ENCODE measurements at regions of chr4 and their contacts with region 1.

Region 1: GRCh38 chr4:109702950-109703663 is at the start of gene CASP6:
- DNase-seq: peak; percentile 63 to 74
- ATAC-seq: peak; percentile 90 to 91
- H3K4me3 ChIP-seq: peak within 1 kb of the TSS; percentile 79 to 92 (median 82)
- H3K27ac ChIP-seq: peak within 1 kb of the TSS; percentile 76 to 82 (median 78)
- H3K4me1 ChIP-seq: peaks cover 8 to 13% of the 10 kb centered on the region in 2 donors
- H3K27me3 ChIP-seq: no peaks in the 10 kb centered on the region
- CTCF ChIP-seq: peak; percentile 50 to 81 (median 78)
- POLR2A ChIP-seq: peak; percentile 10 to 27
- total RNA-seq, gene CASP6: 6.6 to 25.2 (median 9.0) TPM

Region 2: GRCh38 chr4:109424093-109424841 is 278.8 kb before region 1 on chr4:
- in situ Hi-C with region 1: loop called in 3 of 4 experiments (anchors 10 to 25 kb)
- intact Hi-C with region 1: loop called (anchors 2 kb)
- DNase-seq: no peak
- ATAC-seq: no peak
- H3K4me3 ChIP-seq: no peak overlapping the region
- H3K27ac ChIP-seq: no peak overlapping the region
- H3K4me1 ChIP-seq: no peaks in the 10 kb centered on the region
- H3K27me3 ChIP-seq: no peaks in the 10 kb centered on the region
- CTCF ChIP-seq: no peak
- POLR2A ChIP-seq: no peak

Region 3: GRCh38 chr4:109803924-109804571 is 100.9 kb after region 1 on chr4:
- in situ Hi-C with region 1: loop called in 1 of 4 experiments (anchors 25 kb)
- intact Hi-C with region 1: loop called (anchors 2 kb)
- DNase-seq: no peak
- ATAC-seq: peak; percentile 41 to 60
- H3K4me3 ChIP-seq: no peak overlapping the region
- H3K27ac ChIP-seq: no peak overlapping the region
- H3K4me1 ChIP-seq: no peaks in the 10 kb centered on the region
- H3K27me3 ChIP-seq: no peaks in the 10 kb centered on the region
- CTCF ChIP-seq: peak in 2 of 5 experiments; percentile 23 to 38
- POLR2A ChIP-seq: no peak

Region 4: GRCh38 chr4:109967797-109968507 is 264.8 kb after region 1 on chr4:
- in situ Hi-C with region 1: loop called in 1 of 4 experiments (anchors 25 kb)
- intact Hi-C with region 1: no loop called
- DNase-seq: no peak
- ATAC-seq: no peak
- H3K4me3 ChIP-seq: no peak overlapping the region
- H3K27ac ChIP-seq: no peak overlapping the region
- H3K4me1 ChIP-seq: no peaks in the 10 kb centered on the region
- H3K27me3 ChIP-seq: no peaks in the 10 kb centered on the region
- CTCF ChIP-seq: no peak
- POLR2A ChIP-seq: no peak

Region 5: GRCh38 chr4:110193822-110194761 is 491.0 kb after region 1 on chr4:
- in situ Hi-C with region 1: no loop called
- intact Hi-C with region 1: loop called (anchors 10 kb)
- DNase-seq: peak; percentile 4 to 31
- ATAC-seq: no peak
- H3K4me3 ChIP-seq: no peak overlapping the region
- H3K27ac ChIP-seq: no peak overlapping the region
- H3K4me1 ChIP-seq: no peaks in the 10 kb centered on the region
- H3K27me3 ChIP-seq: no peaks in the 10 kb centered on the region
- CTCF ChIP-seq: no peak
- POLR2A ChIP-seq: no peak

Region 6: DNA sequence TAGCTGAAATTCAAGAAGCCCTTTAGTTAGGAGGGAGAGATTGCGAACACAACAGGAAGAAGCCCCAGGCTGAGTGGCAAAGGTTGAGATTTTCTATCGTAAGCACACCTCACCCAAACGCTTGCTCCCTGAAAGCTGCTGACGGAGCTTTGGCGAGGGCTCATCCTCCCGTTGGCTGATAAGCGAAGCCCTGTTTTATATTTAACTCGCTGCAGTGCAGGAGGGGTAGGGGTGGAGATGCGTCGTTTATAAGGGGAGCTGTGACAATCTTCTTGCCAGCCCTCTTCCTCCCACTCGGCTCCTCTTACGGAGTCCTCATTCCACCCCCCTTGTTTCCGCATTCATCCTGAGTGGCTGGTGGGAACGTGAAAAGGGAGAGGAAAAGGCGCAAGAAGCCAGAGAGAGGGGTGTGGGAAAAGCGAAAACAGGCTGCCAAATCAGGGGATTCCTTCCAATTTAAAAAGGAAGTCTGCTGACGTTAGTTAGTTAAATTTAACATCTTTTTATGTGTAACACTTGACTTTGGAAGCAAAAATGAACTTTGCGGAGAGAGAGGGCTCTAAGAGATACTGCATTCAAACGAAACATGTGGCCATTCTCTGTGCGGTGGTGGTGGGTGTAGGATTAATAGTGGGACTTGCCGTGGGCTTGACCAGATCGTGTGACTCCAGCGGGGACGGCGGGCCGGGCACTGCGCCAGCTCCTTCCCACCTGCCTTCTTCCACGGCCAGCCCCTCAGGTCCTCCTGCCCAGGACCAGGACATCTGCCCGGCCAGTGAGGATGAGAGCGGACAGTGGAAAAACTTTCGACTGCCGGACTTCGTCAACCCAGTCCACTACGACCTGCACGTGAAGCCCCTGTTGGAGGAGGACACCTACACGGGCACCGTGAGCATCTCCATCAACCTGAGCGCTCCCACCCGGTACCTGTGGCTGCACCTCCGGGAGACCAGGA is 773.1 kb after region 1 on chr4 and contains the start of gene ENPEP:
- in situ Hi-C with region 1: no loop called
- intact Hi-C with region 1: no loop called
- DNase-seq: peak; percentile 27 to 70
- ATAC-seq: peak; percentile 75 to 86
- H3K4me3 ChIP-seq: peak within 1 kb of the TSS; percentile 56 to 72 (median 66)
- H3K27ac ChIP-seq: peak within 1 kb of the TSS; percentile 70 to 87 (median 77)
- H3K4me1 ChIP-seq: peaks cover 3 to 26% of the 10 kb centered on the region in 2 donors
- H3K27me3 ChIP-seq: no peaks in the 10 kb centered on the region
- CTCF ChIP-seq: no peak
- POLR2A ChIP-seq: peak; percentile 52 to 67
- total RNA-seq, gene ENPEP: 1.4 to 4.2 (median 2.1) TPM